ENCODE measurements at regions of chr3 and their contacts with region 1.

Region 1: DNA sequence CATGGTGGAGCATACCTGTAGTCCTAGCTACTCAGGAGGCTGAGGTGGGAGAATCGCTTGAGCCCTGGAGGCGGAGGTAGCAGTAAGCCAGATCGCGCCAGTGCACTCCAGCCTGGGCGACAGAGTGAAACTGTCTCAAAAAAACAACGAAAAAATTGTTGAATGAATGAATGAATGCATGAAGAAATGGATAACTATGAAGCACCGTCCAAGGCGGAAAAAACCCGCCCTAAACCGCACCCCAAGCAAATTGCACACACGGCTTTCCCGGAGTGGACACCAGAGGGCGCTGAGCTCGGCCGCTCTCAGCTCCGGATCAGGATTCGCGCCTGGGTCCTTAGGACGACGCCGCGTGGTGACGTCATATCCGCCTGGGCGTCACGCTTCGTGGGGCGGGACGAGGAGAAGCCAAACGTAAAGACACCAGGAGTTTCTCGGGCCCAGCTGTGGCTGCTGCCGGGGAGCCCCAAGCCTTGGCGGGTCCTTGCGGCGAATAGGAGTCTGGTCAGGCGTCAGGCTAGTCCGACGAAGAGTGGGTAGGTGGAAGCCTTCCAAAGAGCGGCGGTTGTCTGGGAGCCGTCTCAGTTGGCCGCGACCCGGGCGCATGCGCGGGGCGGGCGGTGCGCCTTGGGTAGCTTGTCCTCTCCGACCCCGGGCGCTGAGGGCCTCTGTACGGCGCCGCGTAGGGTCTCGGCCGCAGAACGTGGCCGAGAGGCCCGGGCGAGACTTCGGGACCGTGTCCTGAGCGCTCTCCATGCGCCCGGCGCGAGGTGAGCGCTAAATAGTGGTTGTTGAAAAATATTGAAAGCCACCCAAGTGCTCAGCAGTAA is at the starts of genes HTD2 and RPP14:
- DNase-seq: peak; percentile 90
- ATAC-seq: peak; percentile 94
- H3K4me3 ChIP-seq: peak within 1 kb of the TSS; percentile 74
- H3K27ac ChIP-seq: peak within 1 kb of the TSS; percentile 94
- H3K4me1 ChIP-seq: 0 out of 2 replicates have a peak, but pooled peaks cover 2% of the 10 kb centered on the region
- H3K27me3 ChIP-seq: no peaks in the 10 kb centered on the region
- CTCF ChIP-seq: peak; percentile 93 to 98 (median 96); a peak in 5 of 6 replicates
- EP300 ChIP-seq: peak in 1 of 2 experiments; percentile 43; a peak in 1 of 4 replicates
- POLR2A ChIP-seq: peak; percentile 84
- RAD21 ChIP-seq: peak; percentile 45; the same call in 1 of the 2 replicates
- polyA plus RNA-seq, gene HTD2: 13.5 to 15.9 TPM
- polyA plus RNA-seq, gene RPP14: 9.1 to 16.3 TPM

Region 2: GRCh38 chr3:58167431-58168351 is 138.4 kb before region 1 on chr3:
- CTCF ChIA-PET with region 1: interaction called, 12 read pairs
- POLR2A ChIA-PET with region 1: no interaction called
- RAD21 ChIA-PET with region 1: no interaction called
- SMC1A ChIA-PET with region 1: no interaction called
- in situ Hi-C with region 1: no loop called
- intact Hi-C with region 1: no loop called
- DNase-seq: no peak
- ATAC-seq: peak; percentile 99
- H3K4me3 ChIP-seq: no peak overlapping the region
- H3K27ac ChIP-seq: no peak overlapping the region
- H3K4me1 ChIP-seq: no peaks in the 10 kb centered on the region
- H3K27me3 ChIP-seq: no peaks in the 10 kb centered on the region
- CTCF ChIP-seq: peak; percentile 76 to 97 (median 95)
- EP300 ChIP-seq: no peak
- POLR2A ChIP-seq: no peak
- RAD21 ChIP-seq: peak; percentile 46

Region 3: GRCh38 chr3:58217209-58217811 is 88.8 kb before region 1 on chr3:
- CTCF ChIA-PET with region 1: interaction called, 54 read pairs
- POLR2A ChIA-PET with region 1: interaction called, 8 read pairs
- RAD21 ChIA-PET with region 1: interaction called, 25 read pairs
- SMC1A ChIA-PET with region 1: interaction called, 39 read pairs
- in situ Hi-C with region 1: no loop called
- intact Hi-C with region 1: no loop called
- DNase-seq: no peak
- ATAC-seq: peak; percentile 59
- H3K4me3 ChIP-seq: no peak overlapping the region
- H3K27ac ChIP-seq: no peak overlapping the region
- H3K4me1 ChIP-seq: peaks cover 56% of the 10 kb centered on the region
- H3K27me3 ChIP-seq: no peaks in the 10 kb centered on the region
- CTCF ChIP-seq: peak; percentile 84 to 94 (median 89)
- EP300 ChIP-seq: 0 out of 4 replicates have a peak, but pooled peaks of 1 of the 2 experiments have one; percentile 19
- POLR2A ChIP-seq: no peak
- RAD21 ChIP-seq: peak; percentile 74

Region 4: GRCh38 chr3:58324391-58325390 is 18.6 kb after region 1 on chr3:
- CTCF ChIA-PET with region 1: interaction called, 78 read pairs
- POLR2A ChIA-PET with region 1: interaction called, 5 read pairs
- RAD21 ChIA-PET with region 1: interaction called, 13 read pairs
- SMC1A ChIA-PET with region 1: interaction called, 13 read pairs
- in situ Hi-C with region 1: no loop called
- intact Hi-C with region 1: no loop called
- DNase-seq: no peak
- ATAC-seq: peak; percentile 59
- H3K4me3 ChIP-seq: no peak overlapping the region
- H3K27ac ChIP-seq: no peak overlapping the region; the same call in 1 of the 2 replicates
- H3K4me1 ChIP-seq: peaks cover 17% of the 10 kb centered on the region
- H3K27me3 ChIP-seq: no peaks in the 10 kb centered on the region
- CTCF ChIP-seq: no peak
- EP300 ChIP-seq: no peak
- POLR2A ChIP-seq: no peak
- RAD21 ChIP-seq: no peak

Region 5: GRCh38 chr3:58392181-58392580 is 86.1 kb after region 1 on chr3:
- CTCF ChIA-PET with region 1: interaction called, 11 read pairs
- POLR2A ChIA-PET with region 1: no interaction called
- RAD21 ChIA-PET with region 1: no interaction called
- SMC1A ChIA-PET with region 1: no interaction called
- in situ Hi-C with region 1: no loop called
- intact Hi-C with region 1: no loop called
- DNase-seq: no peak
- ATAC-seq: no peak
- H3K4me3 ChIP-seq: no peak overlapping the region
- H3K27ac ChIP-seq: no peak overlapping the region
- H3K4me1 ChIP-seq: no peaks in the 10 kb centered on the region
- H3K27me3 ChIP-seq: no peaks in the 10 kb centered on the region
- CTCF ChIP-seq: no peak
- EP300 ChIP-seq: no peak
- POLR2A ChIP-seq: no peak
- RAD21 ChIP-seq: no peak

Region 6: DNA sequence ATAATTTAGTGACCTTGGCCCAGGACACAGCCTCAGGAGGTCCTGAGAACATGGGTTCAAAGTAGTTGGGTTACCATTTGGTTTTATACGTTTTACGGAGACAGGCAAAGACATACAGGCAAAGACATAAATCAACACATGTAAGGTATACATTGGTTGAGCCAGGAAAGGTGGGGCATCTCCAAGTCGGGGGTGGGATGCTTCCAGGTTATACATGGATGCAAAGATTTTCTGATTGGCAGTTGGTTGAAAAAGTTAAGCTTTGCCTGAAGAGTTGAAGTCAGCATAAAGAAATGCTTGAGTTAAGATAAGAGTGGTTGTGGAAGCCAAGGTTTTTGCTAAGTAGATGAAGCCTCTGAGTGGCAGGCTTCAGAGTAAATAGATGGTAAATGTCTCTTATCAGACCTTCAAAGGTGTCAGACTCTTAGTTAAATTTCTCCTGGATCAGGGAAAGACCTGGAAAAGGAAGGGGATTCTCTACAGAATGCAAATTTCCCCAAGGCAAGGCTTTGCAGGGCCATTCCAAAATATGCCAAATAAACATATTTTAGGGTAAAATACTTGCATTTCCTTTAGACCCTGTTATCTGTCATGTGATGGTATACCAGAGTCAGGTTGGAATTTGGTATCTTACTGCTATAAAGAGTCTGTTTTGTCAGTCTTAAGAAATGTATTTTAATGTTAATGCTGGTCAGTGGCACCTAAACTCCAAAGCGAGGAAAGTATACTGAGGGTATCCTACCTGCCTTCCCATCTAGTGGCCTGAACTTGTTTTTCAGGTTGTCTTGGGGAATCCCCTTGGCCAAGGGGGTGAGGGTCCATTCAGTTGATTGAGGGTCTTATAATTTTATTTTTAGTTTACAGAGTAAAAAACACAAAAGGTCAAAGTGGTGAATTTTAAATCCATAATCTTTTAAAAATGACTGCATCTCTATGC is 135.7 kb after region 1 on chr3:
- CTCF ChIA-PET with region 1: no interaction called
- POLR2A ChIA-PET with region 1: no interaction called
- RAD21 ChIA-PET with region 1: no interaction called
- SMC1A ChIA-PET with region 1: no interaction called
- in situ Hi-C with region 1: no loop called
- intact Hi-C with region 1: no loop called
- DNase-seq: no peak
- ATAC-seq: no peak
- H3K4me3 ChIP-seq: no peak overlapping the region
- H3K27ac ChIP-seq: no peak overlapping the region
- H3K4me1 ChIP-seq: no peaks in the 10 kb centered on the region
- H3K27me3 ChIP-seq: no peaks in the 10 kb centered on the region
- CTCF ChIP-seq: no peak
- EP300 ChIP-seq: no peak
- POLR2A ChIP-seq: no peak
- RAD21 ChIP-seq: no peak

Region 7: DNA sequence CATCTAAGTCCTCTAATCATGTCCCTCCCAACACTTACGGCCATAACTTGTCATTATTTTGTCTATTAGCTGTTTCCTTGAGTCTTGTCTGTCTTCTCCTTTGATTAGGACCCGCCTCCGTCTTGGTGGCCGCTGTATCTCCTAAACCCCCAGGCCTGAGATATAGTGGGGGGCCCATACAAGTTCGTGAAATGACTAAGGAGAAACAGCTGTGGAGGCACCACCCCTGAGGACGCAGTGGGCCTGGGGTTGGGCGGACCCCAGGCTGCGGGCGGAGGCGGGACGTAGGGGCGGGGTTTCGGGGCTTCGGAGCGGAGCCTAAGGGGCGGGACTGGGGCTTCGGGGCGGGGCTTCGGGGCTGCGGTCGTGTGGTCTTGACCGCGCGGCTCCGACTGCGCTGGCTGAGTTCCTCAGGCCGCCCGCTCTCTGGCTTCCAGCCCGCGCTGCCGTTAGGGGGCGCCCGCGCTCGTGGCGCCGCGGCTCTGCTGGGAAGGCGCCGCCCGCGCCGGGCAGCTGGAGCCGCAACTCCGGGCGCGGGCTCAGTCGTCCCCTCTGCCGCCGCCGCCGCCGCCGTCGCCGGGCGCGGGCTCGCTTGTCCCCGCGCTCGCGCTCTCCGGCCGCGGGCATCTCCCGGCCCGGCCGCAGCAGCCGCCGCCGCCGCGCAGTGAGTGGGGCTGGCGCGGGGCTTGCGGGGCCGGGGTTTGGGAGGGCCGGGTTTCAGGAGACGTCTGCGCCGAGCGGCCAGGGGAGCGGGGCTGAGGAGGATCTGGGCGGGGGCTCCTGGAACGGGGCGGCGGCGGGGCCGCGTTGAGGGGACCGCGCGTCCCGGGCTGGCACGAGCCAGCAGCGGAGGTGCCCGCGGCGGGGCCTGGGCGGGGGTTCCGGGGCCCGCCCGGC is 185.7 kb after region 1 on chr3 and contains the start of gene KCTD6:
- CTCF ChIA-PET with region 1: interaction called, 22 read pairs
- POLR2A ChIA-PET with region 1: interaction called, 8 read pairs
- RAD21 ChIA-PET with region 1: interaction called, 25 read pairs
- SMC1A ChIA-PET with region 1: interaction called, 22 read pairs
- in situ Hi-C with region 1: no loop called
- intact Hi-C with region 1: loop called (anchors 1 kb)
- DNase-seq: peak; percentile 57
- ATAC-seq: peak; percentile 97
- H3K4me3 ChIP-seq: peak within 1 kb of the TSS; percentile 78
- H3K27ac ChIP-seq: no peak within 1 kb of the TSS
- H3K4me1 ChIP-seq: peaks cover 5% of the 10 kb centered on the region
- H3K27me3 ChIP-seq: peaks cover 0 to 1% of the 10 kb centered on the region in 2 experiments; a peak in 3 of 4 replicates
- CTCF ChIP-seq: peak; percentile 62 to 93 (median 78); a peak in 5 of 6 replicates
- EP300 ChIP-seq: peak in 1 of 2 experiments; percentile 40; a peak in 1 of 4 replicates
- POLR2A ChIP-seq: 0 out of 2 replicates have a peak, but pooled peaks have one; percentile 25
- RAD21 ChIP-seq: peak; percentile 59
- polyA plus RNA-seq, gene KCTD6: 9.1 to 9.4 TPM

Measured in GM12878 (cell line).